Activated naive CD4-positive, alpha-beta T cell treated with anti-CD3 and anti-CD28 coated beads for 36 hours (primary cell): ENCODE measurements at regions of chr11 and their contacts with region 1.

Region 1: DNA sequence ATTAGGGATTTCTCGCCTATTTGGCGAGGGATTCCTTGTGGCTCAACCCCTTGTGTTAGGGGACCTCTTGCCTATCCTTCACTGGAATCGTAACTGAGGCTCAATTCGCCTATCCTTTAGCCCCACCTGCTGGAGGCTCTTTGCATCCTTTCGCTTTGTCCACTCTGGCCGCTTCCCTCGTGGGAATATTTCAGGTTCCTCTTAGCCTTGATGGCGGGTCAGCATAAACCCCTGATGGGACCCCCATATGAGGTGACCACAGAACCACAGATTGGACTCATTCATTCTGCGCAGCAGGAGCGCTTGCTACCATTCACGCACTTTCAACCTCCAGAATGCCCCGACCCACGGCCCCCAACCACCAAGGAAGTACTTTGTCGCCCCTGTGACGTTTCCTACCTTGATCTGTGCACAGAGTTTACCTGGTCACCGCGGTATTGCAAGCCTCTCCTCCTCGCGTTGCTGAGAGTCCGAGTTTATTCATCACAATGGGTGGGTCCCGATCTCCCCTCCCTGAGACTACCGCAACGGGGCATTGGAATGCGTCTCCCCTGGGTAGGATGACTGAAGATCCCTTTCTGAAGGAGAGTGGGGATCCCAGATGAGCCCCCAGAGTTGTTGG is at the start of gene OR52N2:
- DNase-seq: peak; percentile 86
- H3K4me3 Mint-ChIP-seq: peak within 1 kb of the TSS; percentile 89
- H3K27ac Mint-ChIP-seq: peak within 1 kb of the TSS; percentile 67
- H3K4me1 Mint-ChIP-seq: peaks cover 8% of the 10 kb centered on the region
- H3K27me3 Mint-ChIP-seq: peaks cover 5% of the 10 kb centered on the region
- total RNA-seq, gene OR52N2: not detected

Region 2: DNA sequence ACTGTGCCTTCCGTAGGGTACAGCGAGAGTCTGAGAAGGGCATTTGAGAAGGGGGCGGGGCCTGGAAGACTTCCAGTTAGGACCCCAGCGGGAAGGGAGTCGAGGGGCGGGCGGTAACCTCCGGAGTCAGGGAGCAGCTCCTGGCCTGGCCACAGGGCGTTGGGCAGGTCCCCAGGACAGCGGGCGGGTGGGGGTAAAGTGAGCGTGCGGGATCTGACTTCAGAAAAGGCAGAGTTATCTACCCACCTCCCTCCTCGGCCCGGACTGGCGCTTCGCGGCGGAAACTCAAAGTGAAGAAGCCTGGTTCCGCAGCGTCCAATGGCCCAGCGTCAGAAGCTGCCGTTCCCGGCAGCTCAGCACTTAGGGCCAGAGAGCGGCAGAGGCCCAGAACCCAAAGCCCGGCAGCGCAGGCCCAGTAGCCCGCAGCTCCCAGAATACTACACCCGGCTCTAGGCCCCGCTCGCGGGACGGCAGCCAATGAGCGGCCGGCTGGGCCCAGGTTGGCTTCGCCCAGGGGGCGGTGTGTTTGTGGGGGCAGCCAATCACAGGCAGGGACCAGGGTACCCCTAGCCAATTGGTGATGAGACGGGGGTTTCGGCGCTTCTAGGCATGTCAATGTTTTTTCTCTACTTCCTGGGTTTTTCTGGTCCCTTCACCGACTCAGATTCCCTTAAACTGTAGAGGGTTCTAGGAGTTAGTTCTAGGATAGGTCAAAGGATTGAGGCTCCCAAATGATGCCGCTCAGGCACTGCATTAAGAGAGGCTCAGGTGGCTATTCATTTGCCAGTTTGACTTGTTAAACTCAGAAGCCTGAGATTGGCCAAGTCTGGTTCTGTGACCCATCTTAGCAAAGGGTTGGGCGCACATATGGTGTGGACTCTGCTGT is 1200.6 kb before region 1 on chr11 and contains the start of gene TRIM68:
- CTCF ChIA-PET with region 1: no interaction called
- intact Hi-C with region 1: loop called (anchors 10 kb)
- DNase-seq: peak; percentile 97
- H3K4me3 Mint-ChIP-seq: peak within 1 kb of the TSS; percentile 94
- H3K27ac Mint-ChIP-seq: peak within 1 kb of the TSS; percentile 88
- H3K4me1 Mint-ChIP-seq: peaks cover 45% of the 10 kb centered on the region
- H3K27me3 Mint-ChIP-seq: no peaks in the 10 kb centered on the region
- total RNA-seq, gene TRIM68: 11.3 to 15.4 TPM

Region 3: GRCh38 chr11:5046754-5047370 is 761.7 kb before region 1 on chr11:
- CTCF ChIA-PET with region 1: no interaction called
- intact Hi-C with region 1: no loop called
- DNase-seq: no peak
- H3K4me3 Mint-ChIP-seq: no peak overlapping the region
- H3K27ac Mint-ChIP-seq: no peak overlapping the region
- H3K4me1 Mint-ChIP-seq: no peaks in the 10 kb centered on the region
- H3K27me3 Mint-ChIP-seq: peaks cover 2% of the 10 kb centered on the region

Region 4: GRCh38 chr11:5380740-5381342 is 427.8 kb before region 1 on chr11:
- CTCF ChIA-PET with region 1: no interaction called
- intact Hi-C with region 1: loop called (anchors 5 kb)
- DNase-seq: peak; percentile 52
- H3K4me3 Mint-ChIP-seq: no peak overlapping the region
- H3K27ac Mint-ChIP-seq: no peak overlapping the region
- H3K4me1 Mint-ChIP-seq: no peaks in the 10 kb centered on the region
- H3K27me3 Mint-ChIP-seq: no peaks in the 10 kb centered on the region

Region 5: DNA sequence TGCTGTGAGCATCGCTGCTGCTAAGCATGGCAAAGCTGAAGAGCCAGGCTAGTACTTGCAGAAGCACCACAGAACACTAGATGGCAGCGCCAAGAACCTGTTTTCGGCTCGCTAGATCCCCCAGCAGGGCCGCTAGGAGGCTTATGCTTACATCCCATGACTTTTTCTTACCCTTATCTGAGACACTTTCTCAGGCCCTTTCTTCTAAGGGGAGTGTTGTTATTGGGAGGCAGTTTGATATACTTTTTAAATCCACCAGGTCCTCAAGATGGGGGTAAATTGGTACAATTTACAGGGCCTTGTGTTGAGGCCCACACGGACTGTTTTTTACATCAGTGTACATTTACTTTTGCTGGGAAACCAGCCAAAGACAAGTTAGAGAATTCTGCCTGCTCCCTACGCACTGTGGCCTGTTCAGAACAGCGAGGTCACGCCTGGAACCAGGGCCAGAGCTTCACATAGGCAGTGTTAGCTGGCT is 208.2 kb before region 1 on chr11:
- CTCF ChIA-PET with region 1: interaction called, 7 read pairs
- intact Hi-C with region 1: loop called (anchors 1 kb)
- DNase-seq: peak; percentile 79
- H3K4me3 Mint-ChIP-seq: no peak overlapping the region
- H3K27ac Mint-ChIP-seq: no peak overlapping the region
- H3K4me1 Mint-ChIP-seq: peaks cover 6% of the 10 kb centered on the region
- H3K27me3 Mint-ChIP-seq: no peaks in the 10 kb centered on the region

Region 6: GRCh38 chr11:5737091-5737490 is 71.5 kb before region 1 on chr11:
- CTCF ChIA-PET with region 1: no interaction called
- intact Hi-C with region 1: no loop called
- DNase-seq: no peak
- H3K4me3 Mint-ChIP-seq: no peak overlapping the region
- H3K27ac Mint-ChIP-seq: no peak overlapping the region
- H3K4me1 Mint-ChIP-seq: no peaks in the 10 kb centered on the region
- H3K27me3 Mint-ChIP-seq: no peaks in the 10 kb centered on the region

Region 7: DNA sequence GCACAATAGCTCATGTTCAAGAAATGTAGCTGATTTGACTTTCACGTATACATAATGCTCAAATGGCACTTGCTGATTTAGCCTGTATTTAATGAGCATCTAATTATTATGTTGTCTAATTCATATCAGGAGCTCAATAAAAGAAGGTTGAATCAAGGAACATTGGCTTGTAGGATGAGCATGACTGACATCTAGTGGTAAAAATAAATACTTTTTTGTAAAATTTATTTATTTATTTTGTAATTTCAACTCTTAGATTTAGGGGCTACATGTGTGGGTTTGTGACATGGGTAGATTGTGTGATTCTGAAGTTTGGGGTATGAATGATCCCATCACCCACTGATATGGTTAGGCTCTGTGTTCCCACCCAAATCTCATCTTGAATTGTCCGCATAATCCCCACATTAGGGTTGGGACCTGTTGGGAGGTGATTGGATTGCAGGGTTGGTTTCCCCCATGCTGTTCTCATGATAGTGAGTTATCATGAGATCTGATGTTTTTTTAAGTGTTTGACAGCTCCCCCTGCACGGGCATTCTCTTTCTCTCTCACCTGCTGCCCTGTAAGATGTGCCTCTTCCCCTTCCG is 82.7 kb after region 1 on chr11:
- CTCF ChIA-PET with region 1: interaction called, 6 read pairs
- intact Hi-C with region 1: loop called (anchors 1 kb)
- DNase-seq: no peak
- H3K4me3 Mint-ChIP-seq: no peak overlapping the region
- H3K27ac Mint-ChIP-seq: no peak overlapping the region
- H3K4me1 Mint-ChIP-seq: no peaks in the 10 kb centered on the region
- H3K27me3 Mint-ChIP-seq: peaks cover 4% of the 10 kb centered on the region